Activated CD4-positive, alpha-beta memory T cell treated with anti-CD3 and anti-CD28 coated beads, Interleukin-2, amount 10 ng/mL, durations not matched to agents 7 days and 5 days (primary cell): ENCODE measurements at regions of chr3 and their contacts with region 1.

Region 1: DNA sequence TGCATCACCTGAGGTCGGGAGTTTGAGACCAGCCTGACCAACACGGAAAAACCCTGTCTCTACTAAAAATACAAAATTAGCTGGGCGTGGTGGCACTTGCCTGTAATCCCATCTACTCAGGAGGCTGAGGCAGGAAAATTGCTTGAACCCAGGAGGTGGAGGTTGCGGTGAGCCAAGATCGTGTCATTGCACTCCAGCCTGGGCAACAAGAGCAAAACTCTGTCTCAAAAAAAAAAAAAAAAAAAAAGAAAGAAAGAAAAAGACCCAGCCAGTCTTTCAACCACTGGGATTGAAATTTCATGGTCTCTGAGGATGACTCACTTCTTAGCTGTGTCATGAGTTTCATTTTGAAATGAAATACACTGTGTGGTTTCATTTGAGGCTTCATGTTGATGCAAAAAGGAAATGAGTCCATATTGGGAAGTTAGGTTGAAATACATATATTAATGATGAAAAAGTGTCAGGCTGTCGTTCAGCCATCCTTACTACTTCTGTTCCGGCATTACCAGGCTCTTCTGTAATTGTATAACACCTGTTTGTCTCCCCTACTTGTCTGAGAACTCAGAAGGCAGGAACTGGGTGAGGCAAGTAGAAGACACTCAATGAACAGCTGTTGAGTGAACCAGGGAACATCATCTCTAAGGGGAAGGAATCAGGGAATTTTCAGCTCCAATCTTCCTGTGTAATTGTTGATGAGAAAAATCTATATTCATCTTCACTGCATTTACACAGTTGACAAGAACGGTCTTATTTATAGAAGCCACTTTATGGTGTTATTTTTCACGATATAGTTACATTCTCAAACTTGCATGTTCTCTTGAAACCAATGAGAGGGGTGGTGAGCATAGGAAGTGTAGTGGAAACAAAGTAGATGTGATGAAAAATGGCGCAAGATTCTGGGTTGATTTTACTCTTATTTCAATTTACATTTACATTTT is 87.4 kb downstream of the NFKBIZ start:
- DNase-seq: peak; percentile 47
- H3K4me3 Mint-ChIP-seq: peak overlapping the region; percentile 28
- H3K27ac Mint-ChIP-seq: peak overlapping the region; percentile 74
- H3K4me1 Mint-ChIP-seq: peaks cover 29% of the 10 kb centered on the region
- H3K27me3 Mint-ChIP-seq: peaks cover 33% of the 10 kb centered on the region

Region 2: DNA sequence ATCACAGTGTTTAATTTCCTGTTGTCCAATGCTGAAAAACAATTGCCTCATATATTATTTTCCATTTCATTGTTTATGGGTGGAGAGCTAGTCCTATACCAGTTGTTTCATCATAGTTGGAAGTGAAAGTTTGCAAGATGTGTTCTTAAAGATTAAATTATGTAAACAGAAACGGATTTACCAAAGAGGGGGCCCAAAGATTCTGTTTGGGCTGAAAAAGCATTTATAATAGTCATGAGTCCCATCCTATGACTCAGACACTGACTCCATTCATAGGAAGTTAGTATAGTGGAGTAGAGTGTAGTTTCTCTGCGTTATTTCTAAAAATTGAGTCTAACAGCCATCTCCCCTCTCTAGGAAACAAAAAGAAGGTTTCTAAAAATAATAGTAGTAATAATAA is 63.1 kb before region 1 on chr3:
- CTCF ChIA-PET with region 1: no interaction called
- POLR2A ChIA-PET with region 1: no interaction called
- DNase-seq: no peak
- H3K4me3 Mint-ChIP-seq: no peak overlapping the region
- H3K27ac Mint-ChIP-seq: no peak overlapping the region
- H3K4me1 Mint-ChIP-seq: no peaks in the 10 kb centered on the region
- H3K27me3 Mint-ChIP-seq: peaks cover 3% of the 10 kb centered on the region

Region 3: DNA sequence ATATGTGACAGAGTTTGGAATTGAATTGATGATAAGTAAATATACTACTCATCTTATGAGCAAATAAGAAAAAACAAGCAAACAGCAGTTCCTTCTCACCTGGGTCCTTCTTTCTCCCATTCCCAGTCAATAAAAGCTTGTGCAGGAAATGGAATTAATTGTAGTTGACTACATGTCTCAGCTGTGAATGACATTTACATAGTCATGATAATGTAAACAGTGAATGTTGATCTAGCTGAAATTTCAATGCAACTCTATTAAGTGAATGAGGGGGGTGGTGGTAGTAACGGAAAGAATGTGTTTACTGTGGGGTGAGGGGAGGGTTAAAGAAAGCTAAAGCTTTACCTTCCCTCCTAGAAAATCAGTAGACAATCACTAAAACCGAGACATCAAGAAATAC is 11.1 kb before region 1 on chr3:
- CTCF ChIA-PET with region 1: interaction called, 7 read pairs
- POLR2A ChIA-PET with region 1: interaction called, 21 read pairs
- DNase-seq: no peak
- H3K4me3 Mint-ChIP-seq: no peak overlapping the region
- H3K27ac Mint-ChIP-seq: peak overlapping the region; percentile 11
- H3K4me1 Mint-ChIP-seq: peaks cover 52% of the 10 kb centered on the region
- H3K27me3 Mint-ChIP-seq: peaks cover 22% of the 10 kb centered on the region